ENCODE measurements at regions of chr20 and their contacts with region 1.

Region 1: DNA sequence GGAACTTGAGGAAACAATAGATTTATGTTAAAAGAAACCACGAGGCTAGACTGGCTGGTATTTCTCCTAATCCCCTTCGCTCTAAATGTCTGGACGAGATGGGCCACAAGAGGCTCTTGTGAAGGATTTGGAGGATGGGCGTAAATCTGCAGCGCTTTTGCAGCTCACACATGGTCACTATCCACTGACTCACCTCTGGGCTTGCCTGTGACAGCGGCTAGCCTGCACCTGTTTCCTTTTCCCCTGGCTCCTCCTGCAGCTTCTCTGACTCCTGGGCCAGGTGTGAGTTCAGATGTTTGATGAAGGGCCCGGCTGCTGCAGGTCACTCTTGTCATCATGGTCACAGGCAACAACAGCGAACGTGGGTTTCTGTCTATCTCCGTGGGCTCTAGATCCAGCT is 629.4 kb downstream of the CBLN4 start:
- DNase-seq: no peak
- ATAC-seq: no peak

Region 2: GRCh38 chr20:55295046-55295445 is 80.9 kb before region 1 on chr20:
- intact Hi-C with region 1: no loop called
- DNase-seq: no peak
- ATAC-seq: no peak

Region 3: DNA sequence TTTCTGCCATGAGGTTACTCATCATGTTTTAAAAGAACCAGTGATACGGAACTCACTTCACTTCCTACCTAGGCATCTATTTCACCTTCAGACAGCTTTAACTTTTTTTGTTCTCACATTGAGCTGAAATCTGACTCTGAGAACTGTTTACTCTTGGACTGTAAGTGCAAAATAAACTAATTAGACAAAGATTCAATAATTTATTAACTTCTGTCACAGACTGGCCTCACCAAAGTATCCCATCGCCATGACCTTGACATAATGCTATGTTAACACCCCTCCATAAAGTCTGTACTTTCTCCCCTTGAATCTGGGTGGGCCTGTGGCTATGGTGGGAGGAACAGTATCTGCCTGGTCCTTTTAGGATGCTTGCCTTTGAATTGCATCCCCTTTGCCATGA is 181.3 kb after region 1 on chr20:
- intact Hi-C with region 1: loop called in 1 of 2 experiments (anchors 5 kb)
- DNase-seq: no peak
- ATAC-seq: no peak

Measured in left colon (tissue), 2 donors.